Activated CD4-positive, alpha-beta memory T cell treated with anti-CD3 and anti-CD28 coated beads, Interleukin-2, amount 10 ng/mL, durations not matched to agents 7 days and 5 days (primary cell): ENCODE measurements at regions of chr1 and their contacts with region 1.

Region 1: DNA sequence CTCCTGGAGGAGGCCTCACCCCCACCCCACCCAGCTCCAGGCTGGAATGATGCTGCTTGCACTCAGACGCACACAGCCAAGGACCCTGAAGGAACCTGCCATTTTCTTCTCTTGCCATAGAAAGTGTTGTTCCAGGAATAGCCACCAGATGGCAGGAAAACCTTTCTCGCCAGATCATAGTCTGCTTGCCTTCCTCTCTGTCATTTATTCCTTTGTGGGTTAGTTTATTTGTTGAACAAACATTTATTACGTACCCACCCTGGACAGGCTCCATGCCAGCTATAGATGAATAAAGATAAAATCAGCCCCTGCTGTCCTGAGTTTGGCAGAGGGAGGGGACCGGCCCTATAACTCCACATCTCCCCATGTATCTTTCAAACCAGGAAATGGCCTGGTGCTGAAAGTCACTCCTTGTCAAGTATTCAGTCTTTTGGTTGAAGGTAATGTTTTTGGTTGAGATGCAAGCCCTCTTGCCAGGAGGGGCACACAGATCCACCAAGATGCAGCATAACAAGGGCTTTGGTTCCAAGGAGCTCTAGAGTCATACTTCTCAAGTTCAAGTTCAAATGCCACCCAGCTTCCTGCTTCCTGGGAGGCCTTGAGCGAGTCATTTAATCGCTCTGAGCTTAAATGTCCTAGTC is 7.0 kb upstream of the KCNC4 start:
- DNase-seq: peak; percentile 73
- H3K4me3 Mint-ChIP-seq: no peak overlapping the region
- H3K27ac Mint-ChIP-seq: peak overlapping the region; percentile 66
- H3K4me1 Mint-ChIP-seq: peaks cover 19% of the 10 kb centered on the region
- H3K27me3 Mint-ChIP-seq: no peaks in the 10 kb centered on the region

Region 2: GRCh38 chr1:110176299-110176956 is 26.7 kb before region 1 on chr1:
- CTCF ChIA-PET with region 1: no interaction called
- POLR2A ChIA-PET with region 1: no interaction called
- DNase-seq: no peak
- H3K4me3 Mint-ChIP-seq: no peak overlapping the region
- H3K27ac Mint-ChIP-seq: no peak overlapping the region
- H3K4me1 Mint-ChIP-seq: no peaks in the 10 kb centered on the region
- H3K27me3 Mint-ChIP-seq: peaks cover 14% of the 10 kb centered on the region

Region 3: GRCh38 chr1:110281363-110282290 is 78.5 kb after region 1 on chr1:
- CTCF ChIA-PET with region 1: interaction called, 10 read pairs
- POLR2A ChIA-PET with region 1: no interaction called
- DNase-seq: no peak
- H3K4me3 Mint-ChIP-seq: no peak overlapping the region
- H3K27ac Mint-ChIP-seq: no peak overlapping the region
- H3K4me1 Mint-ChIP-seq: no peaks in the 10 kb centered on the region
- H3K27me3 Mint-ChIP-seq: peaks cover 12% of the 10 kb centered on the region

Region 4: DNA sequence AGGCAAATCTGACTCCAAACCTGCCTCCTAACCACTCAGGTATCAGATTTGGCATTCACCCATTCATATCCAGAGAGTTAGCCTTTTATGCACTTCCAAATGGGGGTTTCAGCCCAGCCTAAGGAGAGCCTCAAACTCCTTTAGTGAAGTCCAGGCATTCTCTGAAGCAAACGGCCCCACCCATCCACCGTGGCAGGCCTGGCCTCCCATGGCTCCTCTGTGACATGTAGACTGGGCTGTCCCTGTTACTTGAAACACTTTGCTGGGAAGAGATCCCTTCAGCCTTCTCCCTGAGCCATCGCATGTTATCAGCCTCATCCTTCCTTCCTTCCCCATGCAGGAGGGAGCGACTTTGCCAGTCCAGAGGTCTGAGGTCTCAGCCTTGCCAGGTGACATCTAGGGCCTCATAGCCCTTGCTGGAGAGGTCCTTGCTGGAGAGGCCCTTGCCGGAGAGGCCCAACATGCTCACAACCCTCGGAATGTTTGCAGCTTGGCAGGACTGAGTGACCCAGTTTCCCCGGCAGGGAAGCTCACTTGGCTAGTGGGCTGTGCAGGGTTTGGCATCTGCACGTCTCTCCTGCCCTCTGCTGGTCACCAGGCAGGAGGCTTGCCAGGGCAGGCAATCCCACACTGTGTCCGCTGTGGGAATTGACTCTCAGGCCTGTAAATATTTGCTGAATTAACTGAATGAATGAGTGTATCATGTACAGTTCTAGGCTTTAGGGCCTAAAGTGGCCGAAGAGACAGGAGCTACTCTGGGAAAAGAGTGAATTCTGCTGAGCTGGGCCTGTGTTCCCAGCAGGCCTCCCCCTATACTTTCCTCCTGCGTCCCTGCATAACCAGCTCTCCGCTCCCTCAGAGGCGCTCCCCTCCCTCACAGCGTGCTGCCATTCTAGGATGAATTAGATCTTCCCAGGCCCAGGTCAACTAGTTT is 109.3 kb after region 1 on chr1:
- CTCF ChIA-PET with region 1: interaction called, 234 read pairs
- POLR2A ChIA-PET with region 1: interaction called, 3 read pairs
- DNase-seq: peak; percentile 68
- H3K4me3 Mint-ChIP-seq: no peak overlapping the region
- H3K27ac Mint-ChIP-seq: no peak overlapping the region
- H3K4me1 Mint-ChIP-seq: no peaks in the 10 kb centered on the region
- H3K27me3 Mint-ChIP-seq: no peaks in the 10 kb centered on the region

Region 5: GRCh38 chr1:110318046-110318445 is 114.9 kb after region 1 on chr1:
- CTCF ChIA-PET with region 1: interaction called, 234 read pairs
- POLR2A ChIA-PET with region 1: no interaction called
- DNase-seq: no peak
- H3K4me3 Mint-ChIP-seq: no peak overlapping the region
- H3K27ac Mint-ChIP-seq: no peak overlapping the region
- H3K4me1 Mint-ChIP-seq: no peaks in the 10 kb centered on the region
- H3K27me3 Mint-ChIP-seq: no peaks in the 10 kb centered on the region

Region 6: DNA sequence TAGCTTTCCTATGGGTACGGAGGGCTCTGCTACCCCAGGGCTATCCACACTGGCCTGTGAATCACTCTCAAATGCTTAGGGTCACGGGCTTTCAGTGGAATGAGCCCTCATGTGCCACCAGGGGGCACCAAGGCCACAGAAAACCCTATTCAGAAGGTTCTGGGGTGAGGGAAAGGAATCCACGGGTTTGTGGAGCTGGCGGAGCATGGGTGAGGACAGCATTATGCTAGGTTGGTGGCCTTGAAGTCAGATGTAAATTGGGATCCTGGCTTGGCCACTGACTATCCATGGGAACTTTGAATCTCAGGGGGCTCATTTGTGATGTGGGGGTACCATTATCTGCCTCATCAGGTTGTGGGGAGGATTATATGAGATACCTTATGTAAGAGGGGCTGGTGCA is 209.4 kb after region 1 on chr1:
- CTCF ChIA-PET with region 1: interaction called, 39 read pairs
- POLR2A ChIA-PET with region 1: interaction called, 3 read pairs
- DNase-seq: peak; percentile 71
- H3K4me3 Mint-ChIP-seq: no peak overlapping the region
- H3K27ac Mint-ChIP-seq: no peak overlapping the region
- H3K4me1 Mint-ChIP-seq: peaks cover 13% of the 10 kb centered on the region
- H3K27me3 Mint-ChIP-seq: no peaks in the 10 kb centered on the region

Region 7: GRCh38 chr1:110460253-110461220 is 257.4 kb after region 1 on chr1:
- CTCF ChIA-PET with region 1: interaction called, 74 read pairs
- POLR2A ChIA-PET with region 1: interaction called, 12 read pairs
- DNase-seq: peak; percentile 85
- H3K4me3 Mint-ChIP-seq: no peak overlapping the region
- H3K27ac Mint-ChIP-seq: no peak overlapping the region
- H3K4me1 Mint-ChIP-seq: no peaks in the 10 kb centered on the region
- H3K27me3 Mint-ChIP-seq: no peaks in the 10 kb centered on the region